CD8-positive, alpha-beta T cell (primary cell): ENCODE measurements at regions of chr20 and their contacts with region 1.

Region 1: GRCh38 chr20:3767427-3768341 is at the start of gene ADISSP:
- DNase-seq: peak; percentile 92 to 98 (median 95)
- ATAC-seq: peak; percentile 80
- H3K4me3 ChIP-seq: peak within 1 kb of the TSS; percentile 91 to 99
- H3K4me3 Mint-ChIP-seq: peak within 1 kb of the TSS; percentile 90
- H3K27ac ChIP-seq: peak within 1 kb of the TSS; percentile 99 to 100
- H3K27ac Mint-ChIP-seq: peak within 1 kb of the TSS; percentile 96
- H3K4me1 ChIP-seq: peaks cover 17% of the 10 kb centered on the region
- H3K4me1 Mint-ChIP-seq: peaks cover 26% of the 10 kb centered on the region
- H3K27me3 ChIP-seq: no peaks in the 10 kb centered on the region
- H3K27me3 Mint-ChIP-seq: peaks cover 4% of the 10 kb centered on the region
- CTCF ChIP-seq: no peak
- total RNA-seq, gene ADISSP: 9.6 to 10.7 TPM

Region 2: DNA sequence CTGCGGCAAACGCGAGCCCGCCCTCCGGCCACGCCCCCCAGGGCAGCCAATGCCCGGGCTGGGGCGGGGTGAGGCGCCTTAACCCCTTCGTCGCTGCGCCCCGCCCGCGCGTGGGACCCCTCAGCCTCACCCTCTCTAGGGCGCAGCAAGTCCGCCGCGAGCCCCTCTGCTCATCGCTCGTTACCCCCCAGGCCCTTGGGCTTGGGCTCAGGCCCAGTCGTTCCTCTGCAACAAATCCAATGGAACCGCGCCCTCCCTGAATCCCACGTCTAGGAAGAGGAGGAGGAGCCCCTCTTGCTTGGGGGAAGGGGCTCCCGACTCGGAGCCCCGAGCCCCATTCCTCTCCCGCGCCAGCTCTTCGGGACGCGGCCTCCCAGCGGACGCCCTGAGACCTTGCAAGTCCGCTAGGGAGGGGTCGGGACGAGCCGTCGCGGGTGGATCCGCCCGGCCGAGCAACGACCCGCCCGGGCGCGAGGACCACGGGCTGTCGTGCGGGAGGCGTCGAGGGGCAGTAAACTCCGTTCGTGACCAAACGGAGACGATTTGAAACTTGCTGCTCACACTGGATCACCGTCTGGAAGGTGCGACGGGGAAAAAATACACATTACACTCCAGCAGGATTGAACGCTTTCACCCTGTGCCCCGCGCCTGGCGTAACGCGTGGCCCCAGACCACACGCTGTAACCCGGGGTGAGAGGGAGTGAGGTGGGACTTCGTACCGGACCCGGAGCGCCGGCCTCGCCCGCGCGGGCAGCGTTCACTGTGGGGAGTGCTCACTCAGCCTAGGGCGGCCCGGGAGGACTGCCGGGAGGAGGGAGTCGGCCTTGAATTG is 593.9 kb before region 1 on chr20:
- CTCF ChIA-PET with region 1: no interaction called
- POLR2A ChIA-PET with region 1: no interaction called
- intact Hi-C with region 1: loop called in 1 of 2 experiments (anchors 10 kb)
- DNase-seq: peak; percentile 45 to 95 (median 90)
- ATAC-seq: peak; percentile 10
- H3K4me3 ChIP-seq: peak overlapping the region; percentile 81 to 96
- H3K4me3 Mint-ChIP-seq: peak overlapping the region; percentile 82
- H3K27ac ChIP-seq: peak overlapping the region in 1 of 2 experiments; percentile 97
- H3K27ac Mint-ChIP-seq: peak overlapping the region; percentile 62
- H3K4me1 ChIP-seq: peaks cover 13% of the 10 kb centered on the region
- H3K4me1 Mint-ChIP-seq: peaks cover 17% of the 10 kb centered on the region
- H3K27me3 ChIP-seq: peaks cover 0 to 7% of the 10 kb centered on the region in 2 experiments
- H3K27me3 Mint-ChIP-seq: peaks cover 10% of the 10 kb centered on the region
- CTCF ChIP-seq: no peak

Region 3: GRCh38 chr20:3781153-3781910 is 13.6 kb after region 1 on chr20 and contains the start of gene SPEF1:
- CTCF ChIA-PET with region 1: interaction called, 23 read pairs
- POLR2A ChIA-PET with region 1: interaction called, 25 read pairs
- intact Hi-C with region 1: loop called (anchors 1 kb)
- DNase-seq: peak in 5 of 9 experiments; percentile 37 to 82 (median 39)
- ATAC-seq: peak; percentile 43
- H3K4me3 ChIP-seq: peak within 1 kb of the TSS in 1 of 2 experiments; percentile 26
- H3K4me3 Mint-ChIP-seq: peak within 1 kb of the TSS; percentile 46
- H3K27ac ChIP-seq: peak within 1 kb of the TSS in 1 of 2 experiments; percentile 16
- H3K27ac Mint-ChIP-seq: peak within 1 kb of the TSS; percentile 27
- H3K4me1 ChIP-seq: peaks cover 43% of the 10 kb centered on the region
- H3K4me1 Mint-ChIP-seq: peaks cover 37% of the 10 kb centered on the region
- H3K27me3 ChIP-seq: peaks cover 0 to 3% of the 10 kb centered on the region in 2 experiments
- H3K27me3 Mint-ChIP-seq: peaks cover 5% of the 10 kb centered on the region
- CTCF ChIP-seq: no peak
- total RNA-seq, gene SPEF1: 0.16 TPM in 1 of 2 experiments, not detected in the other

Region 4: GRCh38 chr20:3811467-3812258 is 44.0 kb after region 1 on chr20:
- CTCF ChIA-PET with region 1: no interaction called
- POLR2A ChIA-PET with region 1: interaction called, 11 read pairs
- intact Hi-C with region 1: loop called in 1 of 2 experiments (anchors 2 kb)
- DNase-seq: peak; percentile 79 to 98 (median 95)
- ATAC-seq: peak; percentile 90
- H3K4me3 ChIP-seq: peak overlapping the region; percentile 49 to 72
- H3K4me3 Mint-ChIP-seq: peak overlapping the region; percentile 85
- H3K27ac ChIP-seq: peak overlapping the region; percentile 79 to 90
- H3K27ac Mint-ChIP-seq: peak overlapping the region; percentile 99
- H3K4me1 ChIP-seq: peaks cover 85% of the 10 kb centered on the region
- H3K4me1 Mint-ChIP-seq: peaks cover 73% of the 10 kb centered on the region
- H3K27me3 ChIP-seq: no peaks in the 10 kb centered on the region
- H3K27me3 Mint-ChIP-seq: no peaks in the 10 kb centered on the region
- CTCF ChIP-seq: no peak

Region 5: GRCh38 chr20:3854462-3854871 is 86.8 kb after region 1 on chr20:
- CTCF ChIA-PET with region 1: interaction called, 8 read pairs
- POLR2A ChIA-PET with region 1: interaction called, 5 read pairs
- intact Hi-C with region 1: loop called (anchors 2 to 5 kb)
- DNase-seq: no peak
- ATAC-seq: no peak
- H3K4me3 ChIP-seq: no peak overlapping the region
- H3K4me3 Mint-ChIP-seq: no peak overlapping the region
- H3K27ac ChIP-seq: no peak overlapping the region
- H3K27ac Mint-ChIP-seq: no peak overlapping the region
- H3K4me1 ChIP-seq: no peaks in the 10 kb centered on the region
- H3K4me1 Mint-ChIP-seq: peaks cover 12% of the 10 kb centered on the region
- H3K27me3 ChIP-seq: no peaks in the 10 kb centered on the region
- H3K27me3 Mint-ChIP-seq: no peaks in the 10 kb centered on the region
- CTCF ChIP-seq: no peak

Region 6: DNA sequence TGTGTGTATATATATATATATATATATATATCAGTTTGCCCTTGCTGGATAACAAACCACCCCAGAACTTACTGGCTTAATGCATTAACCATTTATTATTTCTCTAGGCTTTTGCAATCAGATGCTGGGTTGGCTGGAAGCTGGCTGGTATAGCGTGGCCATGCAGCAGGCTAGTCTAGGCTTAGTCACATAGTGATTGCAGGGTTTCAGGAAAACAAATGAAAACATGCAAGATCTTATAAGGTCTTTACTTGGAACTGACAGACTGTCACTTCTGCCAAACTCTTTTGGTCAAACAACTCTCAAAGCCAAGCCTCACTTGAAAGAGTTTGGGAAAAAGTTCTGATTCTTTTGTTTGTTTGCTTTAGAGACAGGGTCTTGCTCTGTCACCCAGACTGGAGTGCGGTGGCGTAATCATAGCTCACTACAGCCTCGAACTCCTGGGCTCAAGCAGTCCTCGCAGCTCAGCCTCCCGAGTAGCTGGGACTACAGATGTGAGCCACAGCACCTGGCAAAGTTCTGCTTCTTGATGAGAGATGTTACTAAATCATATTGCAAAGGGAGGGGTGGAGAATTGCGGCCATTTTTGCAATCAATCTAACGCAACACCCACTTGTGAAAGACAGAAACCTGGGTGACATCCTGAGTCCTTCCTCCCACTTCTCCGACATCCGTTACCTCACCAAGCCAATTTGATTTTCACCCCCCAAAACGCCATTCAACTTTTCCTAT is 322.2 kb after region 1 on chr20:
- CTCF ChIA-PET with region 1: interaction called, 3 read pairs
- POLR2A ChIA-PET with region 1: no interaction called
- intact Hi-C with region 1: loop called in 1 of 2 experiments (anchors 5 kb)
- DNase-seq: peak in 1 of 9 experiments; percentile 6
- ATAC-seq: no peak
- H3K4me3 ChIP-seq: no peak overlapping the region
- H3K4me3 Mint-ChIP-seq: no peak overlapping the region
- H3K27ac ChIP-seq: no peak overlapping the region
- H3K27ac Mint-ChIP-seq: no peak overlapping the region
- H3K4me1 ChIP-seq: peaks cover 8% of the 10 kb centered on the region
- H3K4me1 Mint-ChIP-seq: peaks cover 8% of the 10 kb centered on the region
- H3K27me3 ChIP-seq: no peaks in the 10 kb centered on the region
- H3K27me3 Mint-ChIP-seq: peaks cover 6% of the 10 kb centered on the region
- CTCF ChIP-seq: no peak